ENCODE measurements at regions of chr6 and their contacts with region 1.

Region 1: GRCh38 chr6:87808005-87808757 is 106.1 kb upstream of the AKIRIN2 start:
- DNase-seq: no peak
- H3K4me3 Mint-ChIP-seq: no peak overlapping the region
- H3K27ac Mint-ChIP-seq: no peak overlapping the region
- H3K4me1 Mint-ChIP-seq: peaks cover 6% of the 10 kb centered on the region
- H3K27me3 Mint-ChIP-seq: peaks cover 4% of the 10 kb centered on the region

Region 2: GRCh38 chr6:87742106-87742505 is 66.1 kb before region 1 on chr6:
- intact Hi-C with region 1: loop called (anchors 5 kb)
- DNase-seq: peak; percentile 87
- H3K4me3 Mint-ChIP-seq: peak overlapping the region; percentile 5
- H3K27ac Mint-ChIP-seq: peak overlapping the region; percentile 73
- H3K4me1 Mint-ChIP-seq: peaks cover 30% of the 10 kb centered on the region
- H3K27me3 Mint-ChIP-seq: peaks cover 10% of the 10 kb centered on the region

Region 3: GRCh38 chr6:87756858-87757257 is 51.3 kb before region 1 on chr6:
- intact Hi-C with region 1: loop called (anchors 2 kb)
- DNase-seq: peak; percentile 61
- H3K4me3 Mint-ChIP-seq: no peak overlapping the region
- H3K27ac Mint-ChIP-seq: no peak overlapping the region
- H3K4me1 Mint-ChIP-seq: peaks cover 11% of the 10 kb centered on the region
- H3K27me3 Mint-ChIP-seq: peaks cover 6% of the 10 kb centered on the region

Region 4: DNA sequence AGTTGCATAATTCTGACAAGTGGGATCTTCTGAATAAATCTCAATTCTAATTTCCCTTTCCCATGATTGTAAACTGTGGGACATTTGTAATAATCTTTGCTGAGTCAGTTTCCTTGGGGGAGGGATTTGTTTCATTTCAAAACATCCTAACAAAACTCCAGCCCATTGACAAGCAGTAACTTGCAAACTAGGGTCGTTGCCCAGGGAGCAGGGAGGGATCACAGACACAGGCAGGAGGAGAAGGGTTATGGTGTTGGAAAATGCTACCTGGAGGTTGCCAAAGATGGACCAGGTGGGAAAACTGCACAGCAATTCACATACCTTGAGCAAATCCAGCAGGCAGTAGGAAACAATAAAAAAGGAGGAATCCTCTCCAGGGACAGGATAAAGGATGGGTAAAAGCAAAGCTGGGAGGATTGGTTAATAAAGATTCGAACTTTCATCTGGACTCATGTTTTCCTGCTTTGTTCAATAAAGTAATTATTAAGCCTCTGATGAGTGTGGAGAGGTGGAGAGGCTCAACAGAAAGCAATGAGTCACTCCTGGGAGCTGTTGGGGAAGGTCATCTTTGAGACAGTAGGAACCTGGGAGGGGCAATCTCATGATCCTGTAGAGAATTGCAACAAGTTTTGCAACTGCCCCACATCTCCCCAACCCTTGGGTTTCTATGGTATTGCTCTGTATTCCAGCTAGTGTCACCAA is 18.8 kb before region 1 on chr6:
- intact Hi-C with region 1: no loop called
- DNase-seq: no peak
- H3K4me3 Mint-ChIP-seq: no peak overlapping the region
- H3K27ac Mint-ChIP-seq: no peak overlapping the region
- H3K4me1 Mint-ChIP-seq: no peaks in the 10 kb centered on the region
- H3K27me3 Mint-ChIP-seq: peaks cover 18% of the 10 kb centered on the region

Region 5: GRCh38 chr6:87824958-87825491 is 16.8 kb after region 1 on chr6:
- intact Hi-C with region 1: no loop called
- DNase-seq: no peak
- H3K4me3 Mint-ChIP-seq: no peak overlapping the region
- H3K27ac Mint-ChIP-seq: no peak overlapping the region
- H3K4me1 Mint-ChIP-seq: peaks cover 12% of the 10 kb centered on the region
- H3K27me3 Mint-ChIP-seq: peaks cover 2% of the 10 kb centered on the region

Measured in activated CD4-positive, alpha-beta T cell treated with anti-CD3 and anti-CD28 coated beads, Interleukin-2, amount 10 ng/mL, durations not matched to agents 24 days and 14 days (primary cell).